Mammary epithelial cell (primary cell): ENCODE measurements at regions of chr9 and their contacts with region 1.

Region 1: DNA sequence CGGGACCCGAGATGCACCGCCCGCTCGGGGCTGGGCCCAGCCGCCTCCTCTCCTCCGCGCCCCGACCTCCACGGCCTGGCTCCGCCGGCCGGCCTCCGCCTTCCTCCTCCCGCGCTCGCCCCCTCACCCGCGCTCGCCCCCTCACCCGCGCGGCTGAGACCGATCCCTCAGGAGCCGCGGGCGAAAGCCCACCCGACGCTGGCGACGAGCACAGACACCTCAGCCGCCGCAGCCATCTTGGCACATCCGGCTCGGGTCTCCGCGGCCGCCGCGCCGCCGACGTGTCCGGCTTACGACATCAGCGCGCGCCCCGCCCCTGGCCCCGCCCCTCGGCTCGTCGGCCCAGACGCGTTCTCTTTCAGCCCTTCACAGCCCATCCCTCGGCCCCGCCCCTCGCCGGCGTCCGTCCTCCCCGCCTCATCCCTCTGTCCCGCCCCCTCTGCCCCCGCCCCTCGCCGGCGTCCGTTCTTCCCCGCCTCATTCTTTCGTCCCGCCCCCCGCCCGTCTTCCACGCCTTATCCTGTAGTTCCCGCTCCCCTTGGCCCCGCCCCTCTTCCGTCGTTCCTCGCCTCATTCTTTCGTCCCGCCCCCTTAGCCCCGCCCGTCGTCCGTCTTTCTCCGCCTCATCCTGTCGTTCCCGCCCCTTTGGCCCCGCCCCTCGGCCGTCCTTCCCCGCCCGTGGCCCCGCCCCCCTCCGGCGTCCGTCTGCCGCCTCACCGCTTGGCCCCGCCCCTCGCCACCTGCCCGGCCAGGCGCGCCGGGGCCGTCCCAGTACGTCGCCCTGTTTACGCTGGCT is at the start of gene SEC16A:
- DNase-seq: peak; percentile 93
- H3K4me3 ChIP-seq: peak within 1 kb of the TSS; percentile 76 to 91 (median 79)
- H3K27ac ChIP-seq: peak within 1 kb of the TSS; percentile 97
- H3K4me1 ChIP-seq: peaks cover 26% of the 10 kb centered on the region
- H3K27me3 ChIP-seq: no peaks in the 10 kb centered on the region
- CTCF ChIP-seq: no peak
- total RNA-seq, gene SEC16A: 66.0 to 106 TPM

Region 2: DNA sequence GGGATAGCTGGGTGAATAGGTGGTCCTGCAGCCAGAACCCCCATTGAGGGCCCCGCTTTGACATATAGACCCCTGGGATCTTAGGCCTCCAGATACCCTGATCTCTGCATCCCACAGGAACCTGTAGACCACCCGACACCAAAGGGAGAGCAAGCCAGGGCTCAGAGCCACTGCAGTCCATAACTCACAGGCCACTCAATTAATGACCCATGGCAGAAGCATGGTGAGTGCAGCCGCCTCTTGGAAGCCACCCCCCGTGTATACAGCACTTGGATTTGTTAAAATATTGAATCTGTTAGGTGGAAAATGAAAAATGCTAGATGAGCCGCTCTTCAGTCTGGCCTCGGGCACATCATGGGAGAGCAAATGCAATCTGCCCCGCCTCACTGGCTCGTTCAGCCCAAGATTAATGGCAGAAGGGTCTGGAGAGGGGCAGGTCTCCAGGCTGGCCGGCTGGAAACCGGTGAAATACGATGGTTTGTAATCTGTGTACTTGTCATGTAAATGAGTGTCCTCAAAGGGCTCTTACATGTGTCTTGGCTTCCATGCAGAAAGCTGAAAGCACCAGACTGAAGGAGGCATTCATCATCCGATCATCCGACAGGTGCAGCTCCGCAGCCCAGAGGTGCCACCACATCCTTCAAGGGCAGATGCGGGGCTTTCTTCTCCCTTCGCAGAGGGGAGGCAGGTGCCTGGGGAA is 1284.3 kb before region 1 on chr9:
- CTCF ChIA-PET with region 1: no interaction called
- dilution Hi-C with region 1: no loop called
- in situ Hi-C with region 1: no loop called
- intact Hi-C with region 1: no loop called
- DNase-seq: no peak
- H3K4me3 ChIP-seq: no peak overlapping the region
- H3K27ac ChIP-seq: no peak overlapping the region
- H3K4me1 ChIP-seq: no peaks in the 10 kb centered on the region
- H3K27me3 ChIP-seq: no peaks in the 10 kb centered on the region
- CTCF ChIP-seq: no peak

Region 3: GRCh38 chr9:136439550-136440408 is 43.2 kb before region 1 on chr9 and contains the start of gene INPP5E:
- CTCF ChIA-PET with region 1: no interaction called
- dilution Hi-C with region 1: no loop called
- in situ Hi-C with region 1: no loop called
- intact Hi-C with region 1: loop called (anchors 5 kb)
- DNase-seq: peak; percentile 62
- H3K4me3 ChIP-seq: peak within 1 kb of the TSS; percentile 55 to 82 (median 76)
- H3K27ac ChIP-seq: peak within 1 kb of the TSS; percentile 19
- H3K4me1 ChIP-seq: peaks cover 14% of the 10 kb centered on the region
- H3K27me3 ChIP-seq: no peaks in the 10 kb centered on the region
- CTCF ChIP-seq: peak; percentile 29 to 60
- total RNA-seq, gene INPP5E: 7.8 to 15.9 TPM

Region 4: GRCh38 chr9:136545966-136546698 is 63.1 kb after region 1 on chr9 and contains the start of gene NOTCH1:
- CTCF ChIA-PET with region 1: no interaction called
- dilution Hi-C with region 1: loop called (anchors 5 kb)
- in situ Hi-C with region 1: no loop called
- intact Hi-C with region 1: loop called (anchors 1 kb)
- DNase-seq: peak; percentile 96
- H3K4me3 ChIP-seq: peak within 1 kb of the TSS; percentile 73 to 98 (median 86)
- H3K27ac ChIP-seq: peak within 1 kb of the TSS; percentile 91
- H3K4me1 ChIP-seq: peaks cover 61% of the 10 kb centered on the region
- H3K27me3 ChIP-seq: no peaks in the 10 kb centered on the region
- CTCF ChIP-seq: no peak
- total RNA-seq, gene NOTCH1: 170 to 189 TPM

Region 5: GRCh38 chr9:136631038-136632000 is 148.3 kb after region 1 on chr9:
- CTCF ChIA-PET with region 1: no interaction called
- dilution Hi-C with region 1: no loop called
- in situ Hi-C with region 1: loop called in 1 of 2 experiments (anchors 5 kb)
- intact Hi-C with region 1: loop called (anchors 1 kb)
- DNase-seq: peak; percentile 50
- H3K4me3 ChIP-seq: no peak overlapping the region
- H3K27ac ChIP-seq: no peak overlapping the region
- H3K4me1 ChIP-seq: peaks cover 8% of the 10 kb centered on the region
- H3K27me3 ChIP-seq: no peaks in the 10 kb centered on the region
- CTCF ChIP-seq: peak; percentile 69 to 87

Region 6: DNA sequence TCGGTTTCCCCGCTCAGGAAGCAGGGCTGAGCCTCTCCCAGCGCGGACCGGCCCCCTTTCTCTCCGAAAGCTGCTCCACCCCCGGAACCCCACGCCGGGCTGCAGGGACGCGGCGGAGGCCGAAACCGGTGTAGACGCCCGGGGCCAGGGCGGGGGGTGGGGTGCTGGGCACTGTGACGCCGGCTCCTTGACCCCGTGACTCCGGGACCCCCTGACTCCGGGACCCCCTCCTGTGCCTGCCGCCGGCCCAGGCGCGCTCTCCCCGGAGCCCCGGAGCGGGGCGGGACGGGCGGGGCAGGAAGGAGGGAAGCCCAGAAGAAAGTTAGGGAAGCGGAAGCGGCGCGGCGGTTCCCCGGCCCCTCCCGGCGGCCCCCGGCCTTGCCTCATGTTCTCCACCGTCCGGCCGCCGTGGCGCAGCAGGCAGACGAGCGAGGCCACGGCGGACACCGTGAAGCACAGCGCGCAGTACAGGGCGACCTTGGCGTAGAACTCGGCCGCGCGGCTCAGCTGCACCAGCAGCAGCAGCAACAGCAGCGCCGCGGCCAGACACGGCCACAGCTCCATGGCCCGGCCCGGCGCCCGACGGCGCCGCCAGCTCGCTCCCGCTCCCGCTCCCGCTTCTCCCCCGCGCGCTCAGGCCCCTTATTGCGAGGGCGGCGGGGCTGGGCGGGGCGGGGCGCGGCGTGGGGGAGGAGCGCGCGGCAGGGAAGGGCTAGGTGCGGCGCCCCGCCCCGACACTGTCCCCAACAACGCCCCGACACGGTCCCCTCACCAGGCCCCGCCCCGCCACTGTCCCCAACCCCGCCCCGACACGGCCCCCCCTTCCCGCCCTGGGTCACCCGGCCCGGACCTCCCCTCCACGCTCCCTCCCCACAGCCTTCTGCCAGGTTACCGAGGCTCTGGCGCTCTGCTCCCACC is 204.1 kb after region 1 on chr9 and contains the start of gene AGPAT2:
- CTCF ChIA-PET with region 1: no interaction called
- dilution Hi-C with region 1: no loop called
- in situ Hi-C with region 1: no loop called
- intact Hi-C with region 1: no loop called
- DNase-seq: peak; percentile 51
- H3K4me3 ChIP-seq: peak within 1 kb of the TSS; percentile 75 to 86 (median 82)
- H3K27ac ChIP-seq: peak within 1 kb of the TSS; percentile 22
- H3K4me1 ChIP-seq: peaks cover 12% of the 10 kb centered on the region
- H3K27me3 ChIP-seq: no peaks in the 10 kb centered on the region
- CTCF ChIP-seq: no peak
- total RNA-seq, gene AGPAT2: 37.3 to 49.6 TPM

Region 7: GRCh38 chr9:136711751-136712689 is 229.0 kb after region 1 on chr9 and contains the start of gene DIPK1B:
- CTCF ChIA-PET with region 1: no interaction called
- dilution Hi-C with region 1: loop called (anchors 5 kb)
- in situ Hi-C with region 1: no loop called
- intact Hi-C with region 1: no loop called
- DNase-seq: no peak
- H3K4me3 ChIP-seq: no peak within 1 kb of the TSS
- H3K27ac ChIP-seq: no peak within 1 kb of the TSS
- H3K4me1 ChIP-seq: no peaks in the 10 kb centered on the region
- H3K27me3 ChIP-seq: peaks cover 6% of the 10 kb centered on the region
- CTCF ChIP-seq: no peak
- total RNA-seq, gene DIPK1B: 0.35 to 0.50 TPM

Region 8: DNA sequence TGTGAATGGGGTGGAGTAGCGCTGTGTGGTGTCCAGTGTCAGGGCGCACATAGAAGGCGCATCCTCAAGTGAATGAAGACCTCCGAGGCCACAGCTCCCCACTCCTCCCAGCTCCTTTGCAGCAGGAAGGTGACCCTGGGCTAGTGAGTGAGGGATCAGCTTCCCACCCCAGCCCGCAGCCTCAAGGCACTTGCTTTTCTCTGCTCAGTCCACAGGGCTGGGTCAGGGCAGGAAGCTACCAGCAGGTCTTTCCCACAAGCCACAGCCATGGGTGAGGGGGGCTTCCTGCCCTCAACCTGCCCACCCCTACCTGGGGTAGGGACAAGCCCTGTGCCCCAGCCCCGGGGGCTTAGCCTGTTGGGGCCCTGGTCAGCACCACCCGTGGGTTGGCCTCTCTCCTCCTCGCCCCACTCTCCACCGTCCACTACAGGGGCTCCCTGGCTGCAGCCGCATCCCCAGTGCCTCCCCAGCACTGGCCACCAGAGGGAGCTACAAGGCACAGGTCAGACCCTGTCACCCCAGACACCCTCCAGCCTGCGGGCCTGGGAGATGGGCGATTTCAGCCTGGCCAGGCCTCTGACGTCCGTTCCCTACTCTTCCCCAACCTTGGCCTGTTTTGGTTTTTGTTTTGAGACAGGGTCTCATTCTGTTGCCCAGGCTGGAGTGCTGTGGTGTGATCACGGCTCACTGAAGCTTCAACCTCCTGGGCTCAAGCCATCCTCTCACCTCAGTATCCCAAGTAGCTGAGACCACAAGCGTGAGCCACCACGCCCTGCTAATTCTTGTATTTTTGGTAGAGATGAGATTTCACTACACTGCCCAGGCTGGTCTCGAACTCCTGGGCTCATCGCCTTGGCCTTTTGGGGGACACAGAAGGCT is 546.3 kb after region 1 on chr9:
- CTCF ChIA-PET with region 1: no interaction called
- dilution Hi-C with region 1: loop called (anchors 5 kb)
- in situ Hi-C with region 1: no loop called
- intact Hi-C with region 1: no loop called
- DNase-seq: peak; percentile 50
- H3K4me3 ChIP-seq: peak overlapping the region in 1 of 3 experiments; percentile 57
- H3K27ac ChIP-seq: no peak overlapping the region
- H3K4me1 ChIP-seq: peaks cover 42% of the 10 kb centered on the region
- H3K27me3 ChIP-seq: no peaks in the 10 kb centered on the region
- CTCF ChIP-seq: peak; percentile 88 to 90